ENCODE measurements at regions of chr3 and their contacts with region 1.

Region 1: DNA sequence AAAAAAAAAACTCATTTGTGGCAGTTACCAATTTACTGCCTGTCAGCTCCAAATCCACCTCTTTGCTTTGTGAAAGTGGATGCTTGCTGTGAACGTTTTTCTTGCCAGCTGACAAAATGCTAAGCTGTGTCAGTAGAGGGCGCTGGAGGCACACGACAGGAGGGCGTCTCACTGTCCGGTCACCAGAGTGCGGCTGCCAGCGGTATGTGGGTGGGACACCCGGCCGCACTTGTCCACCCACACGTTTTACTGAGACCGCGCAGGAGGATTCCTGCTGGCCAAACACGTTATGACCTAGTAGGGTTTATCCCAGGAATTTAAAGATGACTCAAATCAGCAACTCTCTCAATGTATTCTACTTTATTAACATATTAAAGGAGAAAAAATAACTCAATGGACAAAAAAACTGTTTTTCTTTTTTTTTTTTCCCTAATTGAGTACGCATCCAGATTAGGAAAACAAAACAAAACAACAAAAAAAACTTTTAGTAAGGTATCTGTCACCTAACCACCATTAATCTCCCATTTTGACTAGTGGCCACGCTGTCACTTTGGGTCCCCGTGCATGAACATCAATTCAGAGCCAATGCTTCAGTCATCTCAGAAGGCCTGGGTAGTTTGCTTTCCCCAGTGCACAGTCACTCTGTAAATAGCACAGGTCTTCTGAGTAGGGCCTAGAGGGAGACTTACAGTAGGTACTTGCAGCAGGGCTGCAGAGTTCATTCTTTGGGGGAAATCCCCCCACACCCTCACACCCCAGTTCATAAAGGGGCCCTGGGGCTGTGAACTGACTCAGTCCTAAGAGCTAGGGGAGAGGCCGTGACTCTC is 43.8 kb upstream of the RPL35A start:
- DNase-seq: peak; percentile 61 to 74 (median 67)
- H3K4me3 ChIP-seq: no peak overlapping the region
- H3K4me3 Mint-ChIP-seq: peak overlapping the region in 6 of 8 donors; percentile 26 to 68 (median 53)
- H3K27ac ChIP-seq: no peak overlapping the region
- H3K27ac Mint-ChIP-seq: peak overlapping the region in 3 of 7 donors; percentile 48 to 57 (median 53)
- H3K4me1 ChIP-seq: peaks cover 7% of the 10 kb centered on the region
- H3K4me1 Mint-ChIP-seq: peaks cover 4 to 10% (median 7%) of the 10 kb centered on the region in 4 donors
- H3K27me3 ChIP-seq: no peaks in the 10 kb centered on the region
- H3K27me3 Mint-ChIP-seq: no peaks in the 10 kb centered on the region

Region 2: GRCh38 chr3:197782230-197782629 is 124.0 kb before region 1 on chr3:
- CTCF ChIA-PET with region 1: no interaction called
- POLR2A ChIA-PET with region 1: no interaction called
- intact Hi-C with region 1: no loop called
- DNase-seq: no peak
- H3K4me3 ChIP-seq: no peak overlapping the region
- H3K4me3 Mint-ChIP-seq: no peak overlapping the region
- H3K27ac ChIP-seq: no peak overlapping the region
- H3K27ac Mint-ChIP-seq: peak overlapping the region in 5 of 7 donors; percentile 3 to 68 (median 18)
- H3K4me1 ChIP-seq: peaks cover 3% of the 10 kb centered on the region
- H3K4me1 Mint-ChIP-seq: peaks cover 0 to 6% (median 2%) of the 10 kb centered on the region in 4 donors
- H3K27me3 ChIP-seq: no peaks in the 10 kb centered on the region
- H3K27me3 Mint-ChIP-seq: no peaks in the 10 kb centered on the region

Region 3: DNA sequence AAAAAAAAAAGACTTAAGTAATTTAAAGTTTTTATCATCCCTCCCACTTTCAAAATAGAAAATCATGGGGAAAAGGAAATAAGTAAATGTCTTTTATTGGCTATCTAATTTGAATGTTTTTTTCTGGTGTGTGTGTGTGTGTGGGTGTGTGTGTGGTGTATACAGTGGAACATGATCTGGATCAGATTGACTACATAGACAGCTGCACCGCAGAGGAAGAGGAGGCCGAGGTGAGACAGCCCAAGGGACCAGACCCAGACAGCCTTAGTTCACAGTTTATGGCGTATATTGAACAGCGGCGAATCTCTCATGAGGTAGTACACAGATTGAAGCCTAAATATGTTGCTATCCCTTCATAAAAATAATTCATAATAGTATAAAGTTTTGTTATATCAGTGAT is 70.7 kb before region 1 on chr3:
- CTCF ChIA-PET with region 1: no interaction called
- POLR2A ChIA-PET with region 1: no interaction called
- intact Hi-C with region 1: no loop called
- DNase-seq: no peak
- H3K4me3 ChIP-seq: no peak overlapping the region
- H3K4me3 Mint-ChIP-seq: no peak overlapping the region
- H3K27ac ChIP-seq: no peak overlapping the region
- H3K27ac Mint-ChIP-seq: peak overlapping the region in 5 of 7 donors; percentile 51 to 89 (median 73)
- H3K4me1 ChIP-seq: no peaks in the 10 kb centered on the region
- H3K4me1 Mint-ChIP-seq: peaks cover 0 to 7% (median 6%) of the 10 kb centered on the region in 4 donors
- H3K27me3 ChIP-seq: no peaks in the 10 kb centered on the region
- H3K27me3 Mint-ChIP-seq: no peaks in the 10 kb centered on the region

Region 4: GRCh38 chr3:197866035-197866434 is 40.2 kb before region 1 on chr3:
- CTCF ChIA-PET with region 1: no interaction called
- POLR2A ChIA-PET with region 1: no interaction called
- intact Hi-C with region 1: no loop called
- DNase-seq: no peak
- H3K4me3 ChIP-seq: no peak overlapping the region
- H3K4me3 Mint-ChIP-seq: no peak overlapping the region
- H3K27ac ChIP-seq: no peak overlapping the region
- H3K27ac Mint-ChIP-seq: no peak overlapping the region
- H3K4me1 ChIP-seq: peaks cover 9% of the 10 kb centered on the region
- H3K4me1 Mint-ChIP-seq: peaks cover 8 to 14% (median 11%) of the 10 kb centered on the region in 4 donors
- H3K27me3 ChIP-seq: no peaks in the 10 kb centered on the region
- H3K27me3 Mint-ChIP-seq: no peaks in the 10 kb centered on the region

Region 5: DNA sequence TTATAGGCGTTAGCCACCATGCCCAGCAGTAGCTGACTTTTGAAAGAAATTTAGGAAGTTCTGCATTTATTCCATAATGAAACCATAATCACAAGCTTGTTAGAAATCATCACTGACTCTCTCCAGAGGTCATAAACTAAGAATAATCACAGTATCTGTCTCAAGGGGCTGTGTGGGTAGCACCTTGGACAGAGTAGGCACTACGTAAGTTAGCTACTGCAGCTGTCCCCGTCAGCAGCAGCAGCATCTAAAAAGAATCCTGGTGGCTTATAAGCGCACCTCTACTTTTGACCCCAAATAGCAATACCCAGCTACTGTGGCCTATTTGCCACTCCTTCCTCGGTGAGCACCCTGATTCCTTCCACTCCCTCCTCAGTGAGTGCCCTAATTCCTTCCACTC is 14.1 kb before region 1 on chr3:
- CTCF ChIA-PET with region 1: interaction called, 10 read pairs
- POLR2A ChIA-PET with region 1: no interaction called
- intact Hi-C with region 1: no loop called
- DNase-seq: no peak
- H3K4me3 ChIP-seq: no peak overlapping the region
- H3K4me3 Mint-ChIP-seq: no peak overlapping the region
- H3K27ac ChIP-seq: no peak overlapping the region
- H3K27ac Mint-ChIP-seq: peak overlapping the region in 1 of 7 donors; percentile 84
- H3K4me1 ChIP-seq: no peaks in the 10 kb centered on the region
- H3K4me1 Mint-ChIP-seq: no peaks in the 10 kb centered on the region
- H3K27me3 ChIP-seq: no peaks in the 10 kb centered on the region
- H3K27me3 Mint-ChIP-seq: no peaks in the 10 kb centered on the region

Region 6: GRCh38 chr3:197942956-197943556 is 36.8 kb after region 1 on chr3:
- CTCF ChIA-PET with region 1: interaction called, 32 read pairs
- POLR2A ChIA-PET with region 1: interaction called, 3 read pairs
- intact Hi-C with region 1: loop called (anchors 1 kb)
- DNase-seq: peak in 4 of 5 donors; percentile 36 to 52 (median 42)
- H3K4me3 ChIP-seq: no peak overlapping the region
- H3K4me3 Mint-ChIP-seq: peak overlapping the region in 1 of 8 donors; percentile 30
- H3K27ac ChIP-seq: no peak overlapping the region
- H3K27ac Mint-ChIP-seq: no peak overlapping the region
- H3K4me1 ChIP-seq: no peaks in the 10 kb centered on the region
- H3K4me1 Mint-ChIP-seq: peaks cover 0 to 1% (median 0%) of the 10 kb centered on the region in 4 donors
- H3K27me3 ChIP-seq: no peaks in the 10 kb centered on the region
- H3K27me3 Mint-ChIP-seq: no peaks in the 10 kb centered on the region

Region 7: GRCh38 chr3:197994736-197995135 is 88.5 kb after region 1 on chr3:
- CTCF ChIA-PET with region 1: no interaction called
- POLR2A ChIA-PET with region 1: no interaction called
- intact Hi-C with region 1: no loop called
- DNase-seq: no peak
- H3K4me3 ChIP-seq: no peak overlapping the region
- H3K4me3 Mint-ChIP-seq: no peak overlapping the region
- H3K27ac ChIP-seq: no peak overlapping the region
- H3K27ac Mint-ChIP-seq: no peak overlapping the region
- H3K4me1 ChIP-seq: no peaks in the 10 kb centered on the region
- H3K4me1 Mint-ChIP-seq: no peaks in the 10 kb centered on the region
- H3K27me3 ChIP-seq: no peaks in the 10 kb centered on the region
- H3K27me3 Mint-ChIP-seq: no peaks in the 10 kb centered on the region